Colonic mucosa (tissue), 4 donors: ENCODE measurements at regions of chr3 and their contacts with region 1.

Region 1: GRCh38 chr3:57597122-57597923 is at the start of gene ARF4:
- DNase-seq: peak; percentile 99
- H3K4me3 ChIP-seq: peak within 1 kb of the TSS; percentile 68
- H3K27ac ChIP-seq: peak within 1 kb of the TSS; percentile 99
- H3K4me1 ChIP-seq: peaks cover 7% of the 10 kb centered on the region
- H3K27me3 ChIP-seq: no peaks in the 10 kb centered on the region
- CTCF ChIP-seq: no peak
- total RNA-seq, gene ARF4: 213 to 250 TPM

Region 2: GRCh38 chr3:57555738-57556458 is 41.4 kb before region 1 on chr3 and contains the start of gene PDE12:
- intact Hi-C with region 1: loop called (anchors 5 kb)
- DNase-seq: peak; percentile 93
- H3K4me3 ChIP-seq: peak within 1 kb of the TSS; percentile 62
- H3K27ac ChIP-seq: peak within 1 kb of the TSS; percentile 85
- H3K4me1 ChIP-seq: peaks cover 3% of the 10 kb centered on the region
- H3K27me3 ChIP-seq: no peaks in the 10 kb centered on the region
- CTCF ChIP-seq: no peak
- total RNA-seq, gene PDE12: 24.4 to 34.5 TPM

Region 3: DNA sequence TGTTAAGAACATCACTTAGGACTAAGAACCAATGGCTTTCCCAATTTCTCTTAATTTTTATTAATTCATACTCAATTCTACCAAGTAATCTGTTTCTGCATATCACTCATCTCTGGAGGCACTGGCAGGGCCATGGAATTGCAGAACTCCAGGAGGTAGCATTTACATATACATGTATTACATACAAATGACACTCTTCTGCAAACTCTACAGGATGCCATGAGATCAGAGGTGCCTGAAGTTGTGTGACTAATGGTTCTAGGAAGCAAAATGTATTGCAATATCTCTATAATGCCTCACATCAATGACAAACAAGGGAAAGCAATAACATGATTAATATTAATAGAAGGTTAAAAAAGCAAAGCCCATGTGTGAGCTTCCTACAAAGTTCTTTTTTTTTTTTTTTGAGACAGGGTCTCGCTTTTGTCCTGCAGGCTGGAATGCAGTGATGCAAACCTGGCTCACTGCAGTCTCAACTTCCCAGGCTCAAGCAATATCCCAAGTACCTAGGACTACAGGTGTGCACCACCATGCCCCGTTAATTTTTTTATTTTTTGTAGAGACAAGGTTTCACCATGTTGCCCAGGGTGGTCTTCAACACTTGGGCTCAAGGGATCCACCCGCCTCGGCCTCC is 62.6 kb after region 1 on chr3:
- intact Hi-C with region 1: no loop called
- DNase-seq: no peak
- H3K4me3 ChIP-seq: no peak overlapping the region
- H3K27ac ChIP-seq: no peak overlapping the region
- H3K4me1 ChIP-seq: no peaks in the 10 kb centered on the region
- H3K27me3 ChIP-seq: no peaks in the 10 kb centered on the region
- CTCF ChIP-seq: no peak

Region 4: GRCh38 chr3:57755668-57756527 is 158.6 kb after region 1 on chr3 and contains the start of gene SLMAP:
- intact Hi-C with region 1: loop called (anchors 10 kb)
- DNase-seq: peak; percentile 99
- H3K4me3 ChIP-seq: peak within 1 kb of the TSS; percentile 89
- H3K27ac ChIP-seq: peak within 1 kb of the TSS; percentile 80
- H3K4me1 ChIP-seq: peaks cover 9% of the 10 kb centered on the region
- H3K27me3 ChIP-seq: no peaks in the 10 kb centered on the region
- CTCF ChIP-seq: no peak
- total RNA-seq, gene SLMAP: 81.1 to 124 TPM